Activated naive CD8-positive, alpha-beta T cell treated with anti-CD3 and anti-CD28 coated beads, Interleukin-2, amount 10 ng/mL, durations not matched to agents 7 days and 5 days (primary cell): ENCODE measurements at regions of chr21 and their contacts with region 1.

Region 1: GRCh38 chr21:36079010-36079649 is 9.3 kb downstream of the CBR1 start:
- DNase-seq: peak; percentile 42
- ATAC-seq: peak; percentile 93
- H3K4me3 Mint-ChIP-seq: peak overlapping the region; percentile 81
- H3K27ac Mint-ChIP-seq: peak overlapping the region; percentile 99
- H3K4me1 Mint-ChIP-seq: peaks cover 22% of the 10 kb centered on the region
- H3K27me3 Mint-ChIP-seq: no peaks in the 10 kb centered on the region

Region 2: GRCh38 chr21:35925497-35925896 is 153.6 kb before region 1 on chr21:
- POLR2A ChIA-PET with region 1: no interaction called
- DNase-seq: no peak
- ATAC-seq: no peak
- H3K4me3 Mint-ChIP-seq: no peak overlapping the region
- H3K27ac Mint-ChIP-seq: no peak overlapping the region
- H3K4me1 Mint-ChIP-seq: peaks cover 1% of the 10 kb centered on the region
- H3K27me3 Mint-ChIP-seq: peaks cover 10% of the 10 kb centered on the region

Region 3: DNA sequence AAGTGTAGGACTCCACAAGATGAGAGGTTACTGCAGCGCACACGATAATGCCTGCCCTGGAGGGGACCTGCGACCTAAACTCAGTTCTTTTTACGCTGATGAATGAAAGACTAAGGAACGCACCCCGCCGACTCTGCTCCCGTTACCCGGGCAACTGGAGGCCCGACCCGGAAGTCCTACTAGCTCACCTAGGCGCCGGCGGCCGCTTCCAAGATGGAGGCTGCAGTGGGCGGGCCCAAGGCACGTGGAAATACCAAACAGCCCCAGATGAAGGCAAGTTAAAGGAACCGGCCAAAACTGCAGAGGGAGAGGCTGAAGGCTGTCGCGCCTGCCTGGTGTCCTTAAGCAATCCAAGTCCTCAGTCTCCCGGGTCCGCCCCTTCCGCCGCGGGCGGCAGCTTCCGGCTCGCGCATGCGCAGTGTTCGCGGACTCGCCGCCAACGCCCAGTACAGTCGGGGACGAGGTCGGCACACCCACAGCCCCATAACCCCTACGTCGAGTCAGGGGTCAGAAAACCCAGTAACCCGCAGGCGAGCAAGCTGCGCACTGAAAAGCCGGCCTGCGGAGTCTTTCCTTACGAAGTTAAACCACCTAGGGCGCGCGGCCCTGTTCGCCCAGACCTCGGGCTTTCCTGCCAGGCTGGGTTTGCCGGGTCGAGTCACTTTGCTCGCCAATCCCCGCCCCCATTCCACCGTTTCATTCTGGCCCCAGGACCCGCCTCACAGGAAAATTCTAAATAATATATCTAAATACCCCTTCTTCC is 18.8 kb before region 1 on chr21 and contains the start of gene SETD4:
- POLR2A ChIA-PET with region 1: interaction called, 14 read pairs
- DNase-seq: peak; percentile 97
- ATAC-seq: peak; percentile 90
- H3K4me3 Mint-ChIP-seq: peak within 1 kb of the TSS; percentile 90
- H3K27ac Mint-ChIP-seq: peak within 1 kb of the TSS; percentile 96
- H3K4me1 Mint-ChIP-seq: peaks cover 15% of the 10 kb centered on the region
- H3K27me3 Mint-ChIP-seq: no peaks in the 10 kb centered on the region
- total RNA-seq, gene SETD4: 20.5 to 29.7 TPM

Region 4: GRCh38 chr21:36092676-36093075 is 13.5 kb after region 1 on chr21:
- POLR2A ChIA-PET with region 1: no interaction called
- DNase-seq: no peak
- ATAC-seq: no peak
- H3K4me3 Mint-ChIP-seq: no peak overlapping the region
- H3K27ac Mint-ChIP-seq: no peak overlapping the region
- H3K4me1 Mint-ChIP-seq: no peaks in the 10 kb centered on the region
- H3K27me3 Mint-ChIP-seq: no peaks in the 10 kb centered on the region